GM13977 (cell line): ENCODE measurements at regions of chr6 and their contacts with region 1.

Region 1: GRCh38 chr6:125753218-125753936 is 3.9 kb downstream of the HEY2 start:
- DNase-seq: no peak
- CTCF ChIP-seq: peak; percentile 39

Region 2: DNA sequence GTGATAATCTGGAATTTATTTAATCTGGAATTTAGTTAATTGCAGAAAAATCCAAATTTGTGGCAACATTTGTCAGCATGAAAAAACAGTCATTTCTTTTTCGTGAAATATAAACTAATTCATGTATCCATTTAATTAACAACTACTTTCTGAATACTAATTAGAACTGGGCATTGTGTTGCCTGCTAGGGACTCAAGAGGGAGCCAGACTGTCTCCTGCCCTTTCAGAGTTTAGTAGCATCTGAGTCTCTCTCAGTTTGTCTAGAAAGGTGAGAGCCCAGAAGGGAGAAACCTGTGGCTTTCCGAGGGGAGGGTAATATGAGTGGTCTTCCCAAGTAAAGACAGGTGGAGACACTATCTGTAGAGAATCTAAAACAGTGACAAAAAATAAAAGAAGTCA is 240.8 kb before region 1 on chr6:
- in situ Hi-C with region 1: loop called (anchors 10 kb)
- DNase-seq: no peak
- CTCF ChIP-seq: peak; percentile 73

Region 3: DNA sequence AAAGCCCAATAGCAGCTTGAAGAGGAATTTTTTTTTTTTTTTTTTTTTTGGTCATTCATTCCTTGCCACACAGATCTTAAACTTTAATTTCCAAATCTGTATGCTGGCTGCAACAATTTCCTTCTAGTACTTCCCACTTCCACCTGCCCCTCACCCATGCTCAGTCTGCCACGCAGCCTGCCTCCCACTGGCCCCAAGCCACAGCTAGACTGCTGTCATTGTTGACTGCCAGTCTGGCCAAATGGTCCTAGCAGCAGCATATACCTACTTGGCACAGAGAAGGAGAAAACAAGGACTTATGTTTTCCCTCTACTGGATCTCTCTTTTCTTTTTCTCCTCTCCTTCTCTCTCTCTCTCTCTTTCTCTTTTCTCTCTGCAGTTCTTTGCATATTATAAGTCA is 122.2 kb before region 1 on chr6:
- in situ Hi-C with region 1: no loop called
- DNase-seq: no peak
- CTCF ChIP-seq: no peak

Region 4: DNA sequence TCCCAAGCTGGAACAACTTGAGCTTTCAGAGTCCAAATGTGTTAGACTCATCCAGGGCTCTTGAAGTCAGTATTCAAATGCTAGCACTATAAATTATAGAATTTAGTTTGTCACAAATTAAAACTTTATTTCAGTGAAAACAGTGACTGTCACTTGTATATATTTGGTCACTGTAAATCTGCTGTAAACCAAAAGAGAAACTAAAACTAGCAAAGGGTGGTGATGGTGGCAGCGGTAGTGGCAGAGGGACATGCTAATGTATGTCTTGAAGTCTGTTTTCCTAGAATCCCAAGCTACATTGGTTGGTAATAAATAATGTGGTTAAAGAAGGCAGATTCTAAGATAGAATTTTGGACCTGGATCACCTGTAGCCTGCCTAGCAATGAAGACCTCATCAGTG is 446.1 kb after region 1 on chr6:
- in situ Hi-C with region 1: no loop called
- DNase-seq: no peak
- CTCF ChIP-seq: no peak